ENCODE measurements at regions of chr17 and their contacts with region 1.

Region 1: GRCh38 chr17:32859857-32860525 is 16.9 kb downstream of the MYO1D start:
- DNase-seq: no peak
- H3K4me3 Mint-ChIP-seq: no peak overlapping the region
- H3K27ac Mint-ChIP-seq: no peak overlapping the region
- H3K4me1 Mint-ChIP-seq: peaks cover 3% of the 10 kb centered on the region
- H3K27me3 Mint-ChIP-seq: peaks cover 6% of the 10 kb centered on the region

Region 2: GRCh38 chr17:32828822-32829221 is 31.2 kb before region 1 on chr17:
- intact Hi-C with region 1: loop called (anchors 5 kb)
- DNase-seq: no peak
- H3K4me3 Mint-ChIP-seq: no peak overlapping the region
- H3K27ac Mint-ChIP-seq: no peak overlapping the region
- H3K4me1 Mint-ChIP-seq: peaks cover 7% of the 10 kb centered on the region
- H3K27me3 Mint-ChIP-seq: peaks cover 27% of the 10 kb centered on the region

Region 3: DNA sequence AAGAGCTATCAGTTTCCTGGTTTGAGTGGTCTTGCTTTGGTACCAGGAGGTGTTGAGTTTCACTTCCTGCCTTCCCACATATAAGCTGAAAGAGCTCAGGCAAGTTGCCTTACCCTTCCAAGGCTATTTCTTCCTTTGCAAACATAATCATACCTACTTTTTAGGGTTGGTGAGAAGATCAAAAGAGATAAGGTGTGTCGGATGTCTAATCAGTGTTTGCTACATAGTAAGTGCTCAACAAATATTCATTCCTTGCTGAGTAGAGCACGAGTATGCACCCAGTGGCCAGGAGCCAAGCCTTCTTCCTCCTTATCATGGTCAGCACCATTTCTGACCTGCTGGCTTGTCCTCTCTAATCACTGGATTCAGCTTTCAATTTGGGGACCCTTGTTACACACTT is 55.3 kb after region 1 on chr17:
- intact Hi-C with region 1: no loop called
- DNase-seq: no peak
- H3K4me3 Mint-ChIP-seq: no peak overlapping the region
- H3K27ac Mint-ChIP-seq: no peak overlapping the region
- H3K4me1 Mint-ChIP-seq: peaks cover 37% of the 10 kb centered on the region
- H3K27me3 Mint-ChIP-seq: peaks cover 10% of the 10 kb centered on the region

Measured in activated CD4-positive, alpha-beta T cell treated with anti-CD3 and anti-CD28 coated beads, Interleukin-2, amount 10 ng/mL, durations not matched to agents 24 days and 14 days (primary cell).